ENCODE measurements at regions of chr18 and their contacts with region 1.

Region 1: DNA sequence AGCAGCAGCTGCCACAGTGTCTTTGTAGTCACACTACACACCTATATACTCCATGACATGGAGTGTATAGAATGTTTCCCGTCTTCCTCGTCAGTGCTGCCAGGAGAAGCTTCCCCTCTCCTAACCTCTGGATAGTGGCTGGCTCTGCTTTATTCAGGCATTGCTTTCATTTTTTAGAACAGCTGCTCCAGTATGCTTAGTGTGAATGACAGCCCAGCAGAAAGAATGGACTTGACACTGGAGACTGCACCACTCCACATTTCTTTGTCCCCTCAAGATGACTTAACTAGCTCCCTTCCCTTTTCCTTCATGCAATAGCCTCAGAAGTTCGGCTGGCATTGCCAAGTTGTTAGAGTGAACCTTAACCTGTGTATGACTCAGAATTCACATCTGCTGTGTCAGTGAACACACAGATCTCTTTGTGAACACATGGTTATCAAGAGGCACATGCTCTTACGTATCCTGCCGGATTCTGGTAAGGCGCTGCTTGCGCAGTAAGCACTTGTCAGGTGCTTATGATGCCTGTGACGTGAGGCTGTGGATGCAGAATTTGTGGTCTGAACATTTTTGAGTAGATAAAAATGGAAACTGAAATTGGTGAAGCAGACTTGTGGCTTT is 73.9 kb downstream of the NEDD4L start:
- DNase-seq: peak in 1 of 3 donors; percentile 71
- ATAC-seq: peak; percentile 96
- H3K4me3 ChIP-seq: no peak overlapping the region
- H3K4me1 ChIP-seq: peaks cover 10% of the 10 kb centered on the region
- CTCF ChIP-seq: no peak

Region 2: DNA sequence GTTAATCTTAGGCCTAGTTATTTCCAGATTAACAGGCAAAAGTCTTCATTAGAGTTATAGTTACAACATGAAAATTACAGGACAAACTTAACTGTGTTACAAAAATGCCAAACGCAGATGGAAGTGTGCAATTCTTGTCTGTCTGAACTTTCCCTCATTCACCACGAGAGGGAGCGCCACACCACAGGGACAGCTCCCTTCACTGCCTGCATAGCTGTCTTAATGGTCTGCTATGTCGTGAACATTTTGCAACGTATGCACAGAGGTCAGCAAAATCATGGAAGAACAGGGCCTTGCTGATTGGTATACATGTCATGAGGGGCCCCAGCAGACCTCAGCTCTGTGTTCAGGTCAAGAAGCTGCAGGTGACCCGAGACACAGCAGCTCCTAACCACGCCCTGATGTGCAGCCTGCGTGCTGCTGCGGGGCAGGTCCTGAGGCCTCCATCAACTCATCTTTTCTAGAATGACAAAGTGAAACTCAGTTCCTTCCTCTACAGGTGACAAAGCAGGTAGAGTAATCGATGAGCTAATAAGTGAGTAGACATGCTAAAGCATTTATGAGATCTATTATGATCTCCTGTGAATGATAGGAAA is 236.0 kb before region 1 on chr18:
- intact Hi-C with region 1: loop called (anchors 5 to 10 kb)
- DNase-seq: peak in 2 of 3 donors; percentile 68 to 72
- ATAC-seq: peak; percentile 98
- H3K4me3 ChIP-seq: no peak overlapping the region
- H3K4me1 ChIP-seq: no peaks in the 10 kb centered on the region
- CTCF ChIP-seq: peak; percentile 83

Region 3: DNA sequence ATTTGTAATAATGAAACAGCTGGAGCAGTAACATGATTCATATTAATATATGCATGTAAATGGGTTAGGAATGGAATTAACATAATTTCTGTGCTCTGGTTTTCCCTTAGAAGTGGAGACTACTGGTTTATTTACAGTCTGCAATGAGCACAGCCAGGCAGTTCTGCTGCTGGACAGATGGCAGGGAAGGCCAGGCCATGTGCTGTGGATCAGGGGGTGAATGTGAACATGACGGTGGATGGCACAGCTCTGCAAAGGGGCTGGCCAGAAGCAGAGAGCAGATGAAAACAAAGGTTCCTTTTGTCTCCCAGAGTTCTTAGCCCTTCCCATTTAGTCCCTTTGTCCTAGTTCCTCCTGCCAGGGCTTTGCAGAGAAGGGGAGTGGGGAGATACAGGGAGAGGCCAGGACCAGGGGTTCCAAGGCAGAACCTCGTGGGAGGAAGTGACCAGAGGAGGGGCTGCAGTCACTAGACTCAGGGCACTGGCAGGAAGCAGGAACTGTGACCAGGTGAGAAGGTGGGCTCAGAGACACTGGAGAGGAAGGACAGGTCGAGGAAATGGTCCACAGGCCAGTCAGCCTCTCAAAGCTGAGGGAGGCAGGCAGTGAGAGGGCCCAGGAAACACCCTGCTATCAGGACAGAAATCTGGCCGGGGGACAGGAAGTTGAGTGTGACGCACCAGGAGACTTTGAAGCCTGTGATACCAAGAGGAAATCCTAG is 201.9 kb before region 1 on chr18:
- intact Hi-C with region 1: no loop called
- DNase-seq: peak; percentile 34 to 55 (median 42)
- ATAC-seq: peak; percentile 89
- H3K4me3 ChIP-seq: no peak overlapping the region
- H3K4me1 ChIP-seq: peaks cover 14% of the 10 kb centered on the region
- CTCF ChIP-seq: no peak

Measured in mucosa of descending colon (tissue), 3 donors.